ENCODE measurements at regions of chr4 and their contacts with region 1.

Region 1: DNA sequence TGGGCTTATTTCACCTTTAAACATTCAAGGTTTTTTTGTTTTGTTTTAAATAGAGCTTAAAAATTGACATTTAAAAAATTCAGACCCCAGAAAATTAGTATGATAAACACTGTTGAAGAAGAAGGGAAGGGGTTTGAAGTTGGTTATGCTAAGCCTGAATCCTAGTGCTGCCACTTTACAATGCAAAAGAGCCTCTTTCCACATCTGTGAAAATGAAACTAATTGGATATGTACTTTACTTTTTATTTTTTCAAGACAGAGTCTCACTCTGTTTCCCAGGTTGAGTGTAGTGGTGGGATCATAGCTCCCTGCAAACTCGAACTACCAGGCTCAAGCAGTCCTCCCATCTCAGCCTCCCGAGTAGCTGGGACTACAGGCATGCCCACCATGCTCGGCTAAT is 41.8 kb downstream of the FIP1L1 start:
- DNase-seq: no peak
- H3K4me3 Mint-ChIP-seq: no peak overlapping the region
- H3K27ac Mint-ChIP-seq: no peak overlapping the region
- H3K4me1 Mint-ChIP-seq: peaks cover 15% of the 10 kb centered on the region
- H3K27me3 Mint-ChIP-seq: no peaks in the 10 kb centered on the region

Region 2: GRCh38 chr4:53432528-53433424 is 13.6 kb after region 1 on chr4:
- CTCF ChIA-PET with region 1: interaction called, 3 read pairs
- intact Hi-C with region 1: loop called (anchors 2 kb)
- DNase-seq: no peak
- H3K4me3 Mint-ChIP-seq: no peak overlapping the region
- H3K27ac Mint-ChIP-seq: no peak overlapping the region
- H3K4me1 Mint-ChIP-seq: peaks cover 26% of the 10 kb centered on the region
- H3K27me3 Mint-ChIP-seq: no peaks in the 10 kb centered on the region

Region 3: DNA sequence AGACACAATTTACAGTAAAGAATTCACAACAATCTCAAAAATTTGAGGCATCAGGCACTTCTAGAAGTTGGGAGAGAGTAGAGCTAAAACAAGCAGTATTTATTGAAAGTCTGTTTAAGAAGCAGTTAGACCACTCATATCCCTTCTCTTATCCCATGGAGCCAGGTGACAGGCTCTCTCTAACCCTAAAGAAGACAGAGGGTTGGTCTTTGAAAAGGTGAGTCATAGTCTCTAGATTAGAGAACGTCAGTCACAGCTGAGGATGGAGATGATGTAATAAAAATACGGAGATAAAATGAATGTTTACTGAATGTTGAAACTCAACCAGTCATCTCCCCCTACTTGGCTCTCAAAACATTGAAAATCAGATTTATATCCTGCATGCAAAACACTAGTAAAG is 421.4 kb after region 1 on chr4:
- CTCF ChIA-PET with region 1: no interaction called
- intact Hi-C with region 1: no loop called
- DNase-seq: no peak
- H3K4me3 Mint-ChIP-seq: no peak overlapping the region
- H3K27ac Mint-ChIP-seq: no peak overlapping the region
- H3K4me1 Mint-ChIP-seq: no peaks in the 10 kb centered on the region
- H3K27me3 Mint-ChIP-seq: peaks cover 6% of the 10 kb centered on the region

Measured in activated naive CD4-positive, alpha-beta T cell treated with anti-CD3 and anti-CD28 coated beads for 36 hours (primary cell).